SK-N-SH (cell line): ENCODE measurements at regions of chr17 and their contacts with region 1.

Region 1: DNA sequence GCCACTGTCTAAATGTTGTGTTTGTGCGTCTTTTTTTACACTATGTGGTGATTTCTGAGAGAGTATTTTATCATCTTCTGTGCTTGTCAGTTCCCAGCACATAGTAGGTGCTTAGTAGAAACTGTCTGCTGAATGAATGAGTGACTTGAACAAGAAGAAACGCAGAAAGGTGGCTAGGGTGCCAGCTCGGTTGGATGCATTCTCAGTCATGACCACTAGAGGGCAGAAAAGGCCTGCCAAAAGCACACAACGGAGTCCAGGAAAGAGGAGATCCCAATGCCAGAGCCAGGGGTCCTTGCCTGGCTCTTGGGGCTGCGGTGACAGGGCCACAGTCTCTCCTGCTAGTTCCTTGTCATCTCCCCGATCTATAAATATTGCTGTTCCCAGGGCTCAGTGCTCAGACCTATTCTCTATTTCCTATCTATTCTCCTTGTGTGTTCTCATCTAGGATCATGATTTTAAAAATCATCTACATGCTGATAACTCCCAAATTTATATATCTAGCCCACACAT is 57.3 kb upstream of the CCL1 start:
- DNase-seq: peak; percentile 85
- H3K4me3 ChIP-seq: no peak overlapping the region
- H3K27ac ChIP-seq: no peak overlapping the region
- H3K4me1 ChIP-seq: no peaks in the 10 kb centered on the region
- H3K27me3 ChIP-seq: peaks cover 9% of the 10 kb centered on the region; the same call in 1 of the 2 replicates
- CTCF ChIP-seq: peak; percentile 89
- EP300 ChIP-seq: no peak
- RAD21 ChIP-seq: peak; percentile 97

Region 2: DNA sequence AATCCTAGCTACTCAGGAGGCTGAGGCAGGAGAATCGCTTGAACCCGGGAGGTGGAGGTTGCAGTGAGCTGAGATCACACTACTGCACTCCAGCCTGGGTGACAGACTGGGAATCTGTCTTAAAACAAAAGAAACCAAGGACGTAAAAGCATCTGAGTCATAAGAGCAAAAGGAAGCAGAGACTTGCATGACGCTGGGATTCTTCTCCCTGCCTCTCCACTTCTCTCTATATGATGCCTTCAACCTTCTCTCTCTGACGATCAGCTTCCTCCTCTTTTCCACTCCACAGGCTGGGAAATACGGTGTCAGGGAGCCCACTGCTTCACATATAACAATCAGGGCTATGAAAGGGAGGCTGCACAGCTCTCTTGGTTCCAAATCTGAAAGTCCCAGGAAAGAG is 14.1 kb before region 1 on chr17:
- CTCF ChIA-PET with region 1: interaction called, 26 read pairs
- POLR2A ChIA-PET with region 1: no interaction called
- DNase-seq: no peak
- H3K4me3 ChIP-seq: no peak overlapping the region
- H3K27ac ChIP-seq: no peak overlapping the region
- H3K4me1 ChIP-seq: no peaks in the 10 kb centered on the region
- H3K27me3 ChIP-seq: no peaks in the 10 kb centered on the region
- CTCF ChIP-seq: no peak
- EP300 ChIP-seq: no peak
- RAD21 ChIP-seq: no peak

Region 3: GRCh38 chr17:34434052-34434451 is 13.7 kb after region 1 on chr17:
- CTCF ChIA-PET with region 1: interaction called, 34 read pairs
- POLR2A ChIA-PET with region 1: no interaction called
- DNase-seq: no peak
- H3K4me3 ChIP-seq: no peak overlapping the region
- H3K27ac ChIP-seq: no peak overlapping the region
- H3K4me1 ChIP-seq: no peaks in the 10 kb centered on the region
- H3K27me3 ChIP-seq: 0 out of 2 replicates have a peak, but pooled peaks cover 5% of the 10 kb centered on the region
- CTCF ChIP-seq: no peak
- EP300 ChIP-seq: no peak
- RAD21 ChIP-seq: no peak

Region 4: DNA sequence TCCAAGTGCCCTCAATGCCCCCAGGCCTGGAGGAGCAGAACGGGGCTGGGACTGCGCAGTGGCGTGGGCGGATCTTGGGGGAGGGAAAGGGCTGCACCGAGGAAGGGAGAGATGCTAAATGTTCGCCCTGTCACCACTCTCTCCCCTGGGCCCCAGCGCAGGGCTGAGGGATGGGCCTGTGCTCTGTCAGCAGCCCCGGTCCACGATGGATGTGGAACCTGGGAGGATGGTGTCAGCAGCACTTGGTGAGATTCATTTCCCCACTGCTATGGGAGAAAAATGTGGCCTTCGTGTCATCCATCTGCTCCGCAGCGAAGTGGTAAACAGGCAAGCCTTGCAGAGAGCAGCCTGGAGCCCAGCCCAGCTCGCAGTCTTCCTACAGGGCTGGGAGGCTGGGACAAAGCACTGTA is 231.1 kb after region 1 on chr17:
- CTCF ChIA-PET with region 1: no interaction called
- POLR2A ChIA-PET with region 1: no interaction called
- DNase-seq: no peak
- H3K4me3 ChIP-seq: no peak overlapping the region
- H3K27ac ChIP-seq: no peak overlapping the region
- H3K4me1 ChIP-seq: peaks cover 0 to 35% of the 10 kb centered on the region in 2 experiments; a peak in 2 of 4 replicates
- H3K27me3 ChIP-seq: no peaks in the 10 kb centered on the region
- CTCF ChIP-seq: no peak
- EP300 ChIP-seq: no peak
- RAD21 ChIP-seq: no peak